Gastrocnemius medialis (tissue), 4 donors: ENCODE measurements at regions of chr2 and their contacts with region 1.

Region 1: GRCh38 chr2:6977113-6977741 is 60.0 kb downstream of the RNF144A start:
- DNase-seq: peak in 1 of 2 donors; percentile 68
- ATAC-seq: peak; percentile 56 to 61
- H3K4me3 ChIP-seq: no peak overlapping the region
- H3K27ac ChIP-seq: peak overlapping the region; percentile 28 to 45 (median 32)
- H3K4me1 ChIP-seq: peaks cover 13 to 27% of the 10 kb centered on the region in 2 donors
- H3K27me3 ChIP-seq: no peaks in the 10 kb centered on the region
- CTCF ChIP-seq: no peak
- POLR2A ChIP-seq: no peak

Region 2: DNA sequence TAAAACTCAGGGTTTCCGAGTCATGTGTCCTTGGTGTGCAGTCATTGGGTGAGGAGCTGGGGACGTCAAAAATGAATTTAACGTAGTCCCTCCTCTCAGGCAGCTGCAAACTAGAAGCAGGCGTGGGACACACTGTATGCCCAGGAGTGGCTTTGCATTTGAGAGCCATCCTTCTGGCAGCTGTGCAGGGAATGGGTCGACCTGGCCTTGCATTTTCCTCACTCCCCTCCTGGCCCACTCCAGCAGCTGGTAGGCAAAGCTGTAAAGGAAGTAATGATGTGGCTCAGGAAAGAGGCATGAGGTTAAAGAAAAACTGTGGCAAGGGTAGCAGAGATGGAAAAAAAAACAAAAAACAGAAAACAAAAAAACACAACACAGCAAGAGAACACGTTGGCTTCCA is 13.5 kb before region 1 on chr2:
- in situ Hi-C with region 1: no loop called
- intact Hi-C with region 1: loop called (anchors 2 kb)
- DNase-seq: no peak
- ATAC-seq: no peak
- H3K4me3 ChIP-seq: no peak overlapping the region
- H3K27ac ChIP-seq: no peak overlapping the region
- H3K4me1 ChIP-seq: peaks cover 54 to 55% of the 10 kb centered on the region in 2 donors
- H3K27me3 ChIP-seq: no peaks in the 10 kb centered on the region
- CTCF ChIP-seq: no peak
- POLR2A ChIP-seq: no peak